ENCODE measurements at regions of chr20 and their contacts with region 1.

Region 1: GRCh38 chr20:1619861-1620444 is at the start of gene SIRPB1:
- DNase-seq: peak; percentile 42
- H3K4me3 Mint-ChIP-seq: no peak within 1 kb of the TSS
- H3K27ac Mint-ChIP-seq: peak within 1 kb of the TSS; percentile 21
- H3K4me1 Mint-ChIP-seq: peaks cover 57% of the 10 kb centered on the region
- H3K27me3 Mint-ChIP-seq: no peaks in the 10 kb centered on the region
- total RNA-seq, gene SIRPB1: 1.4 to 2.0 TPM

Region 2: DNA sequence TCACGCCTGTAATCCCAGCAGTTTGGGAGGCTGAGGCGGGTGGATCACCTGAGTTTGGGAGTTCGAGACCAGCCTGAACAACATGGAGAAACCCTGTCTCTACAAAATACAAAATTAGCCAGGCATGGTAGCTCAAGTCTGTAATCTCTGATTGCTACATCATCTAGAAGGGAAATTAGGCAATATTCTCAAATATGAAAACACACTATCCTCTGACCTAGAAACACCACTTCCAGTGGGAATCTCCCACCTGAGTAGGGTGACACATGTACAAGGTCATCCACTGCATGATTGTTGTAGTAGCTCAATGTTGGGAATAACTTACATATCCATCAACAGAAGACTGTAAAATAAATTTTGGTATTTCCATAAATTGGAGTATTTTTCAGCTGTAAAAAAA is 43.3 kb before region 1 on chr20:
- CTCF ChIA-PET with region 1: no interaction called
- intact Hi-C with region 1: loop called (anchors 2 kb)
- DNase-seq: no peak
- H3K4me3 Mint-ChIP-seq: no peak overlapping the region
- H3K27ac Mint-ChIP-seq: no peak overlapping the region
- H3K4me1 Mint-ChIP-seq: peaks cover 2% of the 10 kb centered on the region
- H3K27me3 Mint-ChIP-seq: no peaks in the 10 kb centered on the region

Region 3: DNA sequence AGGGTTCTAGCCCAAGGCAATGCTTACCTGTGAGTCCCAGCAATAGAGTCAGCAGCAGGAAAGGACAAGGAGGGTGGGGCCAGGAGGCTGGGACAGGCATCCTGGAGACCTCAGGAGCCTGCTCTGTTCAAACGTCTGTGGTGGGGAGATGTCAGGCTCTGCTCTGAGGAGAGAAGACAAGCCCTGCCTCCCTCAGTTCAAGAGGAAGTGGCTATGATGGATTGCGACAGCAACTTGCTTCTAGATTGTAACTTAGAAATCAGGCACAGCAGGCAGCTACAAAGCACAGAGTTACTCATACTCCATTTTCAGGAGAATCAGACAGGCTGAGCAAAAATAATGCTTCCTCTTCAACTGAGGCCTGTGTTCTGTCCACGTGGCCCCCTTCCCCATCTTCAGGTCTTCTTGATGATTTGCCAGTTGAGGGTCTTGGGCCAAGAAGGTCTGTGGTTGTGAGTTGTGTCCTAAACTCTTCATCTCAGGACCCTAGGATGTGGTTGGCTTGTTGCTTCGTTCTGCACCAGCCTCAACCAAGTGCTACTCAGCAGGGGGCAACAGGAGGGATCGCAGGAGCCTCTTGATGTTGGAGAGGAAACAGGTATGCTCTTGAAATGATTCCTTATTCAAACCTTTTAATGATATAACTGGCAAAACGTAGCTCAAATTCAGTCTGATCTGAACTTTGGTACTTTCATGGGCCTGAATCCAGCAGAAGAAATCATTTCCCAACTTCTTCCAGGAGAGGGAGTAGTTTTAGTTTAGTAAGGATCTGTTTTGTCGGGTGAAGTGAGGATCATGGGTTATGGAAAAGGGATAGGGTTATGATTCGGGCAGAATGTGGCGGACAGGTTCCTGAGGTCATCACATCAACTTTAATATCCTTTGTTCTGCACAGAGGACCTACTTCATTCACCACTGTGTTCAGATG is 31.2 kb before region 1 on chr20:
- CTCF ChIA-PET with region 1: no interaction called
- intact Hi-C with region 1: loop called (anchors 2 kb)
- DNase-seq: peak; percentile 58
- H3K4me3 Mint-ChIP-seq: peak overlapping the region; percentile 20
- H3K27ac Mint-ChIP-seq: peak overlapping the region; percentile 88
- H3K4me1 Mint-ChIP-seq: peaks cover 42% of the 10 kb centered on the region
- H3K27me3 Mint-ChIP-seq: no peaks in the 10 kb centered on the region

Region 4: GRCh38 chr20:1637226-1637625 is 17.3 kb after region 1 on chr20:
- CTCF ChIA-PET with region 1: no interaction called
- intact Hi-C with region 1: no loop called
- DNase-seq: no peak
- H3K4me3 Mint-ChIP-seq: no peak overlapping the region
- H3K27ac Mint-ChIP-seq: peak overlapping the region; percentile 21
- H3K4me1 Mint-ChIP-seq: peaks cover 47% of the 10 kb centered on the region
- H3K27me3 Mint-ChIP-seq: no peaks in the 10 kb centered on the region

Region 5: GRCh38 chr20:1685304-1686052 is 65.5 kb after region 1 on chr20:
- CTCF ChIA-PET with region 1: no interaction called
- intact Hi-C with region 1: loop called (anchors 1 kb)
- DNase-seq: peak; percentile 56
- H3K4me3 Mint-ChIP-seq: peak overlapping the region; percentile 83
- H3K27ac Mint-ChIP-seq: peak overlapping the region; percentile 95
- H3K4me1 Mint-ChIP-seq: peaks cover 82% of the 10 kb centered on the region
- H3K27me3 Mint-ChIP-seq: no peaks in the 10 kb centered on the region

Region 6: DNA sequence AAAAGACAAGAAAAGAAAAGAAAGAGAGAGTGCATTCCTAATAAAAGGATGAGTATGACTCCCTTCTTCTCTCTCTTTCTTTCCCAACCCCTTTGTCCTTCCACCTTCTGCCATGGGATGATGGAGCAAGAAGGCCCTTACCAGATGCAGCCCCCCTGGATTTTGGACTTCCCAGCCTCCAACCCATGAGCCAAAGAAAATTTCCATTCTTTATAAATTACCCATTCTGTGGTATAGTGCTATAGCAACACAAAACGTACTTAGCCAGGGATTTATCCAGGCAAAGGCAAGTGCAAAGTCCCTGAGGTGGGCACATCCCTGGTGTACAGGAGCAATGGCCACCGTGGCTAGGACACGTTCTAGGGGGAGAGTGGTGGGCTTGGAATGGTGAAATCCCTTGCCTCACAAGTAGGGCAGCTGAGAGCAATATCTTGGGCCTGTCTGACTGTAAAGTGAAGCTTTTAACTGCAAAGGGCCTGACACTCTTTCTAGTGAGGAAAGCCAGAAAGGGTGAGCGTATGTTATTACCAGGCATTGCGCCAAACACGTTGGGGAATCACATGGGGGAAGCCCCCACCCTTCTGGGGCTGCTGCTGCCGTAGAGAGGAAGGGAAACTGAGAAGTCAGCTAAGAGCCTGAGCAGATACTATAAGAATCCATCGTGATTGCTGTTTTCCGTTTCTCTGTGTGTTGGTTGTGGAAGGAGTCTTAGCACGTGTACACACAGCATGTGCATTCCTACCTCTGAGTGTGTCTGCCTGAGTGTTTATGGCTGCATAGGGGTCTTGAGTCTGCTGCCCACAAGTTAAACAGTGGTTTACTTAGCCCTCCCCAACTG is 224.6 kb after region 1 on chr20:
- CTCF ChIA-PET with region 1: no interaction called
- intact Hi-C with region 1: loop called (anchors 10 kb)
- DNase-seq: peak; percentile 90
- H3K4me3 Mint-ChIP-seq: no peak overlapping the region
- H3K27ac Mint-ChIP-seq: peak overlapping the region; percentile 77
- H3K4me1 Mint-ChIP-seq: peaks cover 12% of the 10 kb centered on the region
- H3K27me3 Mint-ChIP-seq: peaks cover 5% of the 10 kb centered on the region

Region 7: GRCh38 chr20:2178318-2179232 is 558.6 kb after region 1 on chr20:
- CTCF ChIA-PET with region 1: no interaction called
- intact Hi-C with region 1: no loop called
- DNase-seq: no peak
- H3K4me3 Mint-ChIP-seq: no peak overlapping the region
- H3K27ac Mint-ChIP-seq: no peak overlapping the region
- H3K4me1 Mint-ChIP-seq: no peaks in the 10 kb centered on the region
- H3K27me3 Mint-ChIP-seq: peaks cover 2% of the 10 kb centered on the region

Measured in activated naive CD4-positive, alpha-beta T cell treated with anti-CD3 and anti-CD28 coated beads for 36 hours (primary cell).